ENCODE measurements at regions of chr1 and their contacts with region 1.

Region 1: GRCh38 chr1:15028102-15028501 is 125.4 kb upstream of the TMEM51 start:
- DNase-seq: no peak
- CTCF ChIP-seq: no peak

Region 2: DNA sequence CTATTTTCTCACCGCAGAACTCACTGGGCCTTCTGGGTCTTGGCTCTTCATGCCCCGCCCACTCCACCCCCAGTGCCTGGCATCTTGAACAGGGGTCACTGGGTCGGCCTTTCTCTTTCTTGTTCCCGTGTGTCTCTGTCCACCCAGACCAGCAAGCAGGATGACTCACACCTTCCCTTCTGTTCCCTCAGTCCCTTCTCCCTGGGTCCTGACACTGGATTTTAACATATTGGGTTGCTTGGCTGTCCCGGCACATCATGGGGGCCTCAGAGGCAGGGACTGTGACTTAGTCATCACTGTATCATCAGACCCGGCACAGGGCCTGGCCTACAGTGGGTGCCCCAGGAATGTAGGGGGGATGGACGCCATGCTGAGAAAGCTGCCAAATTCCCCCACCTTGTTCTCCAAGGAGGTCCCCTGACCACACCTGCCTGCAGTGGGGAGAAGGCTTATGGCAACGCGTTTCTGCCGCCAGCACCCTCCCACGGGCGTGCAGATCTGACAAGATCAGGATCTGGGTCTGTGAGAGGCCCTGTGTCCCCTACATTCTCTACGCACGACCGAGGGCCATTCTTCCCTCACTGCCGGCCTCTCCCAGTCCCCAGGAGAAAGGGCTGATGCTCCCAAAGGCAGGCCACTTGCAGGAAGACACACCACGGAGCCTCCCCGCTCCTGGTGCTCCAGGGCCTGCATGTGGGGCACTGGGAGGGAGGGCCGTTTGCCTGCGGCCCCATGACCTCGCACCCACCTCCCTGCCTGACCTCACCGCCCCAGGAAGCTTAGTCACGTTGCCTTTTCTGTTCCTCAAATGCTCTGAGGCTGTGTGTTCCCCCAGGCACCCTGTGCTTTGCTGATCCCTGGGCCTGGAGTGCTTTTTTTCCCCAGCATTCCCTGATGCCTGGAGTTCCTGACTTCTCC is 31.7 kb before region 1 on chr1:
- CTCF ChIA-PET with region 1: no interaction called
- POLR2A ChIA-PET with region 1: no interaction called
- DNase-seq: peak; percentile 35
- CTCF ChIP-seq: no peak

Region 3: GRCh38 chr1:15014516-15014915 is 13.6 kb before region 1 on chr1:
- CTCF ChIA-PET with region 1: interaction called, 12 read pairs
- POLR2A ChIA-PET with region 1: no interaction called
- DNase-seq: no peak
- CTCF ChIP-seq: no peak

Region 4: DNA sequence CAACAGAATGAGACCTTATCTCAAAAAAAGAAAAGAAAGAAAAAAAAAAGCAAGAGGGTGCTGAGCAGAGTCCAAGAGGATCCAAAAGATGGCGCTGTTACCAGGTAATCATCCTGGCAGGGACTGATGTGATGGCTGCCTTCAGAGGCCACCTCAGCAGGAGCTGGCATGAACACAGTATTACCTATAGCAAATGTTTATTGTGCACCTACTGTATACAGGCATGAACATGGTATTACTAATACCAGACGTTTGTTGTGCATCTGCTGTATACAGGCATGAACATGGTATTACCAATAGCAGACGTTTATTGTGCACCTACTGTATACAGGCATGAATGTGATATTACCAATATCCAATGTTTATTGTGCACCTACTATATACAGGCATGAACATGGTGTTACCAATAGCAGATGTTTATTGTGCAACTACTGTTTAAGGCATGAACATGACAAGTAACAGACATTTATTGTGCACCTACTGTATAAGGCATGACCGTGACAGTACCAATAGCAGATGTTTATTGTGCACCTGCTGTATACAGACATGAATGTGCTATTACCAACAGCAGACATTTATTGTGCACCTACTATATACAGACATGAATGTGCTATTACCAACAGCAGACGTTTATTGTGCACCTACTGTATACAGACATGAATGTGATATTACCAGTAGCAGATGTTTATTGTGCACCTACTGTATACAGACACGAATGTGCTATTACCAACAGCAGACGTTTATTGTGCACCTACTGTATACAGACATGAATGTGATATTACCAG is 10.3 kb after region 1 on chr1:
- CTCF ChIA-PET with region 1: interaction called, 12 read pairs
- POLR2A ChIA-PET with region 1: no interaction called
- DNase-seq: no peak
- CTCF ChIP-seq: peak; percentile 25

Measured in GM10248 (cell line).